Activated B cell treated with CpG ODN at 0.5 μM for 24 hours (primary cell): ENCODE measurements at regions of chr6 and their contacts with region 1.

Region 1: GRCh38 chr6:34145161-34146020 is 496 bp downstream of the GRM4 start:
- DNase-seq: peak; percentile 26
- ATAC-seq: peak; percentile 38
- H3K4me3 Mint-ChIP-seq: peak overlapping the region; percentile 74
- H3K27ac Mint-ChIP-seq: no peak overlapping the region
- H3K4me1 Mint-ChIP-seq: peaks cover 20% of the 10 kb centered on the region
- H3K27me3 Mint-ChIP-seq: peaks cover 52% of the 10 kb centered on the region
- CTCF ChIP-seq: no peak

Region 2: DNA sequence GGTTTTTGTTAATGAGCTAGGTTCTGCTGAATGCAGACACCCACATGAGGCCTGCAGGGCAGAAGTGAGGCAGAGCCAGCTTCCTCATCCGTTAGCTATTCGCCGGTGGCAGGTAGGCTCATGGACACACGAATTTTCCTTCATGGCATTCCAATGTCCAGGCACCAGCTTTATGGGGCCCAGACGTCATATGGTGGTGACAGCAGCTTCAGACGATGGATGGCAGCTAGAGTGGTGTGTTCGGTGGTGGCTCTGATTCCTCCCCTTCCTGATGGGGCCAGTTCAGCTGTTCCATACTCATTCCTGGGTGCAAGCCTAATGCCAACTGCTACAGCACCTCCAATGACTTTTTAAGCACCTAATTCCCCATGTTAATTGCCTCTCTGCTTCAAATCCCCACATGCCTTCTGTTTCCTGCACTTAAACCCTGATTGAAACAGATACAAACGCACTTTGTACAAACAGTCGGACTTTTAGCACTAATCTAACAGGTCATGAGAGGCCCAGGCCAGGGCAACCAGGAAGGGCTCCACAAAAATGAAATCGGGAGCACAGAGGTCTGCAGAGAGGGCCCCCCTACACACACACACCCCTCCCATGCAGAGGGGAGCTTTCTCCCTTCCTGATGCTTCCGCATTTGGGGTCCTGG is 305.9 kb before region 1 on chr6:
- CTCF ChIA-PET with region 1: no interaction called
- POLR2A ChIA-PET with region 1: interaction called, 10 read pairs
- intact Hi-C with region 1: no loop called
- DNase-seq: no peak
- ATAC-seq: no peak
- H3K4me3 Mint-ChIP-seq: no peak overlapping the region
- H3K27ac Mint-ChIP-seq: no peak overlapping the region
- H3K4me1 Mint-ChIP-seq: peaks cover 3% of the 10 kb centered on the region
- H3K27me3 Mint-ChIP-seq: peaks cover 18% of the 10 kb centered on the region
- CTCF ChIP-seq: no peak